Mammary epithelial cell (primary cell): ENCODE measurements at regions of chr15 and their contacts with region 1.

Region 1: GRCh38 chr15:94576889-94577533 is 345.6 kb downstream of the MCTP2 start:
- DNase-seq: peak; percentile 31
- H3K4me3 ChIP-seq: no peak overlapping the region
- H3K27ac ChIP-seq: no peak overlapping the region
- H3K4me1 ChIP-seq: no peaks in the 10 kb centered on the region
- H3K27me3 ChIP-seq: no peaks in the 10 kb centered on the region
- CTCF ChIP-seq: peak; percentile 87 to 88

Region 2: GRCh38 chr15:94163999-94164807 is 412.8 kb before region 1 on chr15:
- CTCF ChIA-PET with region 1: no interaction called
- dilution Hi-C with region 1: no loop called
- in situ Hi-C with region 1: no loop called
- intact Hi-C with region 1: loop called (anchors 10 kb)
- DNase-seq: peak; percentile 59
- H3K4me3 ChIP-seq: no peak overlapping the region
- H3K27ac ChIP-seq: no peak overlapping the region
- H3K4me1 ChIP-seq: no peaks in the 10 kb centered on the region
- H3K27me3 ChIP-seq: no peaks in the 10 kb centered on the region
- CTCF ChIP-seq: peak; percentile 81 to 84

Region 3: GRCh38 chr15:94412979-94413746 is 163.8 kb before region 1 on chr15:
- CTCF ChIA-PET with region 1: interaction called, 4 read pairs
- dilution Hi-C with region 1: no loop called
- in situ Hi-C with region 1: no loop called
- intact Hi-C with region 1: loop called (anchors 2 kb)
- DNase-seq: no peak
- H3K4me3 ChIP-seq: no peak overlapping the region
- H3K27ac ChIP-seq: no peak overlapping the region
- H3K4me1 ChIP-seq: no peaks in the 10 kb centered on the region
- H3K27me3 ChIP-seq: no peaks in the 10 kb centered on the region
- CTCF ChIP-seq: peak; percentile 37 to 46

Region 4: GRCh38 chr15:94470492-94470891 is 106.5 kb before region 1 on chr15:
- CTCF ChIA-PET with region 1: no interaction called
- dilution Hi-C with region 1: no loop called
- in situ Hi-C with region 1: no loop called
- intact Hi-C with region 1: loop called (anchors 5 kb)
- DNase-seq: peak; percentile 9
- H3K4me3 ChIP-seq: no peak overlapping the region
- H3K27ac ChIP-seq: no peak overlapping the region
- H3K4me1 ChIP-seq: no peaks in the 10 kb centered on the region
- H3K27me3 ChIP-seq: no peaks in the 10 kb centered on the region
- CTCF ChIP-seq: no peak

Region 5: GRCh38 chr15:94494732-94495131 is 82.3 kb before region 1 on chr15:
- CTCF ChIA-PET with region 1: no interaction called
- dilution Hi-C with region 1: loop called (anchors 5 kb)
- in situ Hi-C with region 1: no loop called
- intact Hi-C with region 1: no loop called
- DNase-seq: peak; percentile 47
- H3K4me3 ChIP-seq: no peak overlapping the region
- H3K27ac ChIP-seq: no peak overlapping the region
- H3K4me1 ChIP-seq: peaks cover 32% of the 10 kb centered on the region
- H3K27me3 ChIP-seq: no peaks in the 10 kb centered on the region
- CTCF ChIP-seq: no peak

Region 6: DNA sequence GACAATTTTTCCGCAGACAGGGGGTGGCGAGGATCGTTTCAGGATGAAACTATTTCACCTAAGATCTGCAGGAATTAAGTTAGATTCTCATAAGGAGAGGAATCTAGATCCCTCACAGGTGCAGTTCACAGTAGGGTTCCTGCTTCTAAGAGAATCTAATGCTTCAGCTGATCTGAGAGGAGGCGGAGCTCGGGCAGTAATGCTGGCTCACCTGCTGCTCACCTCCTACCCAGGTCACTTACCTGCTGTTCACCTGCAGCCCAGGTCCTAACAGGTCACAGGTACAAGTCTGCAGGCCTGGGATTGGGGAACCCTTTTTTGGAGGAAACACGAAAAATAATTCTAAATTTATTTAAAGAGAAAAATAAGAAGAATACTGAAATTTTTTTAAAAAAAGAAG is 61.2 kb after region 1 on chr15:
- CTCF ChIA-PET with region 1: no interaction called
- dilution Hi-C with region 1: no loop called
- in situ Hi-C with region 1: no loop called
- intact Hi-C with region 1: no loop called
- DNase-seq: no peak
- H3K4me3 ChIP-seq: no peak overlapping the region
- H3K27ac ChIP-seq: no peak overlapping the region
- H3K4me1 ChIP-seq: no peaks in the 10 kb centered on the region
- H3K27me3 ChIP-seq: no peaks in the 10 kb centered on the region
- CTCF ChIP-seq: no peak